ENCODE measurements at regions of chr1 and their contacts with region 1.

Region 1: DNA sequence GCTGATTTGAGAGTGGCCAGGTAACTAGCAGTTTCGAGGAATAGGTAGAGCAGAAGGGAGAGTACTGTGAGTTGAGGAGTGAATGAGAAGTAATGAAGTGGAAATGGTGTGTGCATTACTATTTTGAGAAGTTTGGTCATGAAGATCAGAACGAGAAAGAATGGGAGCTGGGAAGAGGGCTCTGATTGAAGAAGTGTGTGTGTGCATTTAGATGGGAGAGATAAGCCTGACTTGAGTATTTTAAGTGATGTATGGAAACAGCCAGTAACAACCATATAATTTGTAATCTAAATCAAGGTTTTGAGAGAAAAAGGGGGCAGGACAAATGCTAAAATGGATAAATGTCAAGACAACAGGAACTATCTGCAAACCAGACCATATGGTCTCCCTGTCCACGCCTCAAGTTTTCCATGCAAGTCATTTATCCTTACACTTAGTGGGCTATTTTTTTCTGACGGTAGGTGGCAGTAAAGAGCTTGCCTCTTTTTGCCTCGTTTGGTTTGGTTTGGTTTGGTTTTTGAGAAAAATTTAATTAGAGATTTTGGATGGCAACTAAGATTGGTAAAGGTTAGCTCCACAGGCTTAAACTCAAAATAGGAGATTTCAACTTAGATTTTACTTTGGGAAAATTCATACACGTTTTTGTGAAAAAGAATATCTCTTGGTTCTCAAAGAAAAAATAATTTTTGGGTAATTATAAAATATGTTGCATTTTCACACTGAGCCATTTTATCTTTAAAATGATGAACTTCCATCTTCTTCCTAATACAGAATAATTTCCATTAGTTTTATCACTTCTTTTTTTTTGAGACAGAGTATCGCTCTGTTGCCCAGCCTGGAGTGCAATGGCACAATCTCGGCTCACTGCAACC is 9.5 kb upstream of the B3GALNT2 start:
- DNase-seq: peak; percentile 34 to 57
- H3K4me3 ChIP-seq: no peak overlapping the region
- H3K27ac ChIP-seq: no peak overlapping the region
- H3K4me1 ChIP-seq: no peaks in the 10 kb centered on the region
- H3K27me3 ChIP-seq: no peaks in the 10 kb centered on the region
- CTCF ChIP-seq: peak; percentile 93

Region 2: DNA sequence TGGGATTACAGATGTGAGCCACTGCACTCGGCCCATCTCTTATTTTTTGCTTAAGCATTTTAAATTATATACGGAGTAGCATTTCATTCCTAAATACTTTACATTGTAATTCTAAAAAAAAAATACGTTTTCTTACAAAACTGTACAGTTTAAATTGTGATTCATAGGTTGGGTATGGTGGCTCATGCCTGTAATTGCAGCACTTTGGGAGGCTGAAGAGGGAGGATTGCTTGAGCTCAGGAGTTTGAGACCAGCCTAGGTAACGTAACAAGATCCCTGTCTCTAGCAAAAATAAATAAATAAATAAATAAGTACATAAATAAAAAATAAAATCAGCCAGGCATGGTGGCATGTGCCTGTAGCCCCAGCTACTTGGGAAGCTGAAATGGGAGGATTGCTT is 121.9 kb before region 1 on chr1:
- CTCF ChIA-PET with region 1: no interaction called
- POLR2A ChIA-PET with region 1: no interaction called
- intact Hi-C with region 1: no loop called
- DNase-seq: no peak
- H3K4me3 ChIP-seq: no peak overlapping the region
- H3K27ac ChIP-seq: no peak overlapping the region
- H3K4me1 ChIP-seq: no peaks in the 10 kb centered on the region
- H3K27me3 ChIP-seq: no peaks in the 10 kb centered on the region
- CTCF ChIP-seq: no peak

Region 3: DNA sequence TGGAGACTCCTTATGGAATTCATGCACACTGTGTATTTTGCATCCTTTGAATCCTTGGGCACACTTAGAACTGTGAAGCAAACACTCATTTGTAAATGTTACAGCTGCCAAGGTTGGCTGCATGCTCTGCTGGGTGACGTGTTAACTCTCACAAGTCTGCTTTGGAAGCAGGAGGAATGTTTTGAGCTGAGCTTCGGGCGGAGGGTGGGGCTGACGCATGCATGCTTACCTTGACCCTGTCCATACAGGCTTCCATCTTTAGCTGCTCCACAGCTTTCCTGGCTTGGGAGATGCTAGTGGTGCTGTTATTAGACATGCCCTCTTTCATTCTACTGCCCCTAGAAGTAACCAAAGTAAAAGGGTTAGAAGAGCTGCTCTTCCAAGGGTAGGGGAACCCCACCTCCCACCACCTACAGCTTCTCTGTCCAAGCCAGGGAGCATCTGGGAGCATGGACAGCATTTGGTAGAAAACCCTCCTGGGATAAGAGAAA is 69.8 kb after region 1 on chr1:
- CTCF ChIA-PET with region 1: no interaction called
- POLR2A ChIA-PET with region 1: no interaction called
- intact Hi-C with region 1: no loop called
- DNase-seq: no peak
- H3K4me3 ChIP-seq: no peak overlapping the region
- H3K27ac ChIP-seq: no peak overlapping the region
- H3K4me1 ChIP-seq: no peaks in the 10 kb centered on the region
- H3K27me3 ChIP-seq: no peaks in the 10 kb centered on the region
- CTCF ChIP-seq: peak; percentile 38; the same call in 1 of the 2 replicates

Region 4: DNA sequence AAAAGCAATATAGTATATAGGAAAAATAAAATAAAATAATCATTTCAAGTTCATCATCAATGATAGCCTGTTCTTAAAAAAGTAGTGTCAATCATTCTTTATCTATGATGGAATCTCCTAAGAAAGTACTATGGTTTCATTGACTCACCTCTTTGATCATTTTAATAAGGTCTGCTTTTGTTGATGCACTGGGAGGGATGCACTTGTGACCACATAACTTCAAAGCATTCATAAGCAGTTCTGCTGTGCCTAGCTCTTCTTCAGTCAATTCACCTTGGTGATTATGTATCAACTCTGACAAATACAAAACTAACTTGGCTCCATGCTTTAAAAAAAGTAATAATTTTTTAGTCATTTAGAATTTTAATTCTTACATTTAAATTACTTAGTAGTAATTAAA is 220.6 kb after region 1 on chr1:
- CTCF ChIA-PET with region 1: interaction called, 13 read pairs
- POLR2A ChIA-PET with region 1: no interaction called
- intact Hi-C with region 1: loop called (anchors 1 kb)
- DNase-seq: no peak
- H3K4me3 ChIP-seq: no peak overlapping the region
- H3K27ac ChIP-seq: no peak overlapping the region
- H3K4me1 ChIP-seq: no peaks in the 10 kb centered on the region
- H3K27me3 ChIP-seq: no peaks in the 10 kb centered on the region
- CTCF ChIP-seq: no peak

Measured in PC-9 (cell line).